Heart left ventricle (tissue), 16 donors: ENCODE measurements at regions of chr9 and their contacts with region 1.

Region 1: DNA sequence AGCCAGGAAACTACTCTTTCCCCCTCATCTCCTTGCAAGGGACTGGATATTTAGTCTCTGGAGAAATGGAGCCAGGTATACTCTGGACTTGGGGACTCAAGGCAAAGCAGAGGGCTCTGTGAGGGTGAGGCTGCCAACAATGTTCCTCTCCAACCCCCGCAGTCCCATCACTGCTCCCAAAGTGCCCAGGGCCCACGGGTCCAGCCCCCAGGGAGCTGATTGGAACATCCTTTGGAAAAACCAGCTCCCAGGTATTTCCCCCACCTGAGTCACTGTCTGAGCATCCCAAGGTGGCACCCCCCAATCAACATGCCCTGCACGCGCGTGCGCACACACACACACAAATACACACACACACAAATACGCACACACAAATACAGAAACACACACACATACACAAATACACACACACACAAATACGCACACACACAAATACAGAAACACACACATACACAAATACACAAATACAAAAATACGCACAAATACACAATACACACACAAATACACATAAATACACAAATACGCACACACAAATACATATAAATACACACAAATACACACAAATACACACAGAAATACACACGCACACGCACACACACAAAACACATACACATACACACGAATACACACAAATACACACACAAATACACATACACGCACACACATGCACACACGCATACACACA is 137.4 kb downstream of the DAB2IP start:
- DNase-seq: no peak
- ATAC-seq: no peak
- H3K4me3 ChIP-seq: no peak overlapping the region
- H3K27ac ChIP-seq: no peak overlapping the region
- H3K4me1 ChIP-seq: peaks cover 0 to 6% (median 2%) of the 10 kb centered on the region in 12 donors
- H3K27me3 ChIP-seq: no peaks in the 10 kb centered on the region
- CTCF ChIP-seq: no peak
- POLR2A ChIP-seq: no peak

Region 2: GRCh38 chr9:121566481-121567465 is 222.1 kb before region 1 on chr9:
- intact Hi-C with region 1: no loop called
- DNase-seq: peak; percentile 65 to 79 (median 77)
- ATAC-seq: peak; percentile 36 to 74 (median 60)
- H3K4me3 ChIP-seq: peak overlapping the region; percentile 5 to 61 (median 46)
- H3K27ac ChIP-seq: peak overlapping the region; percentile 69 to 94 (median 84)
- H3K4me1 ChIP-seq: peaks cover 14 to 39% (median 34%) of the 10 kb centered on the region in 12 donors
- H3K27me3 ChIP-seq: no peaks in the 10 kb centered on the region
- CTCF ChIP-seq: no peak
- POLR2A ChIP-seq: no peak

Region 3: DNA sequence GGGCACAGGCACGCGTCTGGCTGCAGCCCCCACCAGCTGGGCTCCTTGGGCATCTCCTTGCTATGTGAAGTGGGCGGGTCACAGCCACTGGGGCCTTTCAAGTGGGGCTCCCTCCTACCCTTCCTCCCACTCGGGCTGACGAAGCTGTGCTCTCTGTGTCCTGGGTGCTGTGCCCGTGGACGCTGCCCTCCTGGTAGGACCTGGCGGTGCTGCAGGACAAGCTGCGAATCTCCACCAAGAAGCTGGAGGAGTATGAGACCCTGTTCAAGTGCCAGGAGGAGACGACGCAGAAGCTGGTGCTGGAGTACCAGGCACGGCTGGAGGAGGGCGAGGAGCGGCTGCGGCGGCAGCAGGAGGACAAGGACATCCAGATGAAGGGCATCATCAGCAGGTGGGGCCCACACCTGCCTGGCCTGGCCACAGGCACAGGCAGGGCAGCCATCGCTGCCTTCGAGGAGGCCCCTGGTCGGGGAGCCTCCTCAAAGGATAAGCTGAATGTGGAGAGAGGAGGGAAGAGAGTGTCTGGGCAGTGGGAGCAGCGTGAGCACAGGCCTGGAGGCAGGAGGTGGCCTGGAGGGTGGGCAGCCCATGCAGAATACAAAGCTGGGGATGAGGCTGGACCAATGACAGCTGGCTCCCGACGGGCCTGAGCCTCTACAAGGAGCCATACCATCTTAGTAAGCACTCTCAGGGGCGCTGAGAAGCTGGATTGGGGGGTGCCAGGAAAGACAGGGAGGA is 12.7 kb before region 1 on chr9:
- intact Hi-C with region 1: loop called in 1 of 10 experiments (anchors 1 kb)
- DNase-seq: peak in 4 of 5 donors; percentile 6 to 48 (median 18)
- ATAC-seq: no peak
- H3K4me3 ChIP-seq: no peak overlapping the region
- H3K27ac ChIP-seq: peak overlapping the region in 1 of 12 donors; percentile 28
- H3K4me1 ChIP-seq: peaks cover 0 to 75% (median 29%) of the 10 kb centered on the region in 12 donors
- H3K27me3 ChIP-seq: no peaks in the 10 kb centered on the region
- CTCF ChIP-seq: no peak
- POLR2A ChIP-seq: no peak

Region 4: DNA sequence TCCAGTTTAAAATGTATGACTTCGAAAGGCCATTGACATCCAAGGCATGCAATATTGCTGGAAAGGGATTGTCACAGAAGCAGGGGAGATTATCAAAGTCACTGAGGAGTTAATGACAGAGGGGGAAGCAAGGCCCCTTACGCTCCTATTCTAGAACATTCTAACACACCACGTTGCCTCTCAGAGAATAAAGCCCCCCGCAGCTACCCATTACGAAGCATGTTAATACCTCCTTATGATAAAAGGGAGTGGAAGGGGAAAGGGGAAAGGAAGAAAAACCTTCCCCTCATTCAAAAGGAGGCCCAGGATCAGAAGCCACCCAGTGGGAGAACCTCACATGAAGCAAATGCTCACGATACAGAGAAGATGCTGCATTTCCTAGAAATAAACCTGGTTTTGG is 76.2 kb after region 1 on chr9:
- intact Hi-C with region 1: no loop called
- DNase-seq: no peak
- ATAC-seq: no peak
- H3K4me3 ChIP-seq: no peak overlapping the region
- H3K27ac ChIP-seq: no peak overlapping the region
- H3K4me1 ChIP-seq: peaks cover 0 to 17% (median 11%) of the 10 kb centered on the region in 12 donors
- H3K27me3 ChIP-seq: no peaks in the 10 kb centered on the region
- CTCF ChIP-seq: no peak
- POLR2A ChIP-seq: no peak